H1 (cell line): ENCODE measurements at regions of chr19 and their contacts with region 1.

Region 1: GRCh38 chr19:3324321-3324856 is 42.0 kb upstream of the NFIC start:
- DNase-seq: peak in 1 of 2 experiments; percentile 94
- H3K4me3 ChIP-seq: no peak overlapping the region
- H3K27ac ChIP-seq: no peak overlapping the region
- H3K4me1 ChIP-seq: no peaks in the 10 kb centered on the region
- H3K27me3 ChIP-seq: no peaks in the 10 kb centered on the region; a peak in 1 of 7 replicates
- CTCF ChIP-seq: peak; percentile 76 to 93 (median 92)
- EP300 ChIP-seq: no peak
- POLR2A ChIP-seq: no peak
- RAD21 ChIP-seq: peak; percentile 24 to 54; a peak in 3 of 4 replicates

Region 2: DNA sequence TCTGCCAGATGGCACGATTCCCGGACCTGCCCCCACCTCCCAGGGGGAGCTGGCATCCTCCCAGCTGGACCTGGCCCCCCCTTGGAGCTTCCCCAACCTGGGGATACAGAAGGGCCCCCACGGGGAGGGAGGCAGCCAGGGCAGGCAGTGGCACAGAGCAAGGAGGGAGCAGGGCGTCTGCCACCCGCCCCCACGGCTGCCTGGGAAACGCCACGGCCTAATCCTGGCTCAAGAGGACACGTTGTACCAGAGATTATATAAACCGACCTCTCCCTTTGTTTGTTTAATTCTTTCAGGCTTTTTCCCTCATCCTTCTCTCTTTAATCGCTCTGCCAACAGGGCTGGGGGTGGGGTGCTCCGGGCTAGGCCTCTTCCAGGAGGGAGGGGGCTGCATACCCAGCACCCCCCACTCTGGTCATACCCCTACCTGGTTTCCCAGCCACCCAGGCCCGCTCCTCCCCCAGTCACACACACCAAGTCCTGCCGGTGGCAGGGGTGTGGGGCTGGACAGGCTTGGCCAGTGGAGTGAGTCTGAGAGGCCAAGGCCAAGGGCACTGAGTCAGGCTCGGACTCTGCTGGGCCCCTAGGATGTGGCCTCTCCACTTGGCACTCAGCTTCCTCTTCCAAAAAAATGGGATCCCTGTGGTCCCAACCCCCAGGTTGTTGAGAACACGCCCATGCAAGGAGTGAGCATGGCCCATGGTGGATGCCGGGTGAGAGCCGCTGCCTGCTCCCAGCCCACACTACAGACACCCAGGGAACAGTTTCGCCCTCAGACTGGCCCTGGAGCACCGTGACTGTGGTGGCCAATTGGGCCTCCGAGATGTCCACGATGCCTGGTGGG is 12.5 kb after region 1 on chr19:
- CTCF ChIA-PET with region 1: interaction called, 24 read pairs
- POLR2A ChIA-PET with region 1: no interaction called
- DNase-seq: no peak
- H3K4me3 ChIP-seq: no peak overlapping the region
- H3K27ac ChIP-seq: no peak overlapping the region
- H3K4me1 ChIP-seq: no peaks in the 10 kb centered on the region
- H3K27me3 ChIP-seq: peaks cover 0 to 6% (median 1%) of the 10 kb centered on the region in 4 experiments; a peak in 1 of 7 replicates
- CTCF ChIP-seq: no peak
- EP300 ChIP-seq: no peak
- POLR2A ChIP-seq: no peak
- RAD21 ChIP-seq: no peak

Region 3: GRCh38 chr19:3353493-3353892 is 29.1 kb after region 1 on chr19:
- CTCF ChIA-PET with region 1: interaction called, 10 read pairs
- POLR2A ChIA-PET with region 1: no interaction called
- DNase-seq: no peak
- H3K4me3 ChIP-seq: no peak overlapping the region
- H3K27ac ChIP-seq: no peak overlapping the region
- H3K4me1 ChIP-seq: no peaks in the 10 kb centered on the region; a peak in 1 of 7 replicates
- H3K27me3 ChIP-seq: peaks cover 23 to 60% (median 44%) of the 10 kb centered on the region in 4 experiments
- CTCF ChIP-seq: no peak
- EP300 ChIP-seq: no peak
- POLR2A ChIP-seq: no peak
- RAD21 ChIP-seq: no peak

Region 4: GRCh38 chr19:3440082-3440481 is 115.7 kb after region 1 on chr19:
- CTCF ChIA-PET with region 1: interaction called, 12 read pairs
- POLR2A ChIA-PET with region 1: interaction called, 3 read pairs
- DNase-seq: peak in 1 of 2 experiments; percentile 92
- H3K4me3 ChIP-seq: no peak overlapping the region
- H3K27ac ChIP-seq: no peak overlapping the region
- H3K4me1 ChIP-seq: peaks cover 3 to 15% (median 10%) of the 10 kb centered on the region in 4 experiments
- H3K27me3 ChIP-seq: no peaks in the 10 kb centered on the region
- CTCF ChIP-seq: peak; percentile 78 to 83 (median 78)
- EP300 ChIP-seq: no peak
- POLR2A ChIP-seq: no peak
- RAD21 ChIP-seq: peak; percentile 84 to 87